ENCODE measurements at regions of chr19 and their contacts with region 1.

Region 1: DNA sequence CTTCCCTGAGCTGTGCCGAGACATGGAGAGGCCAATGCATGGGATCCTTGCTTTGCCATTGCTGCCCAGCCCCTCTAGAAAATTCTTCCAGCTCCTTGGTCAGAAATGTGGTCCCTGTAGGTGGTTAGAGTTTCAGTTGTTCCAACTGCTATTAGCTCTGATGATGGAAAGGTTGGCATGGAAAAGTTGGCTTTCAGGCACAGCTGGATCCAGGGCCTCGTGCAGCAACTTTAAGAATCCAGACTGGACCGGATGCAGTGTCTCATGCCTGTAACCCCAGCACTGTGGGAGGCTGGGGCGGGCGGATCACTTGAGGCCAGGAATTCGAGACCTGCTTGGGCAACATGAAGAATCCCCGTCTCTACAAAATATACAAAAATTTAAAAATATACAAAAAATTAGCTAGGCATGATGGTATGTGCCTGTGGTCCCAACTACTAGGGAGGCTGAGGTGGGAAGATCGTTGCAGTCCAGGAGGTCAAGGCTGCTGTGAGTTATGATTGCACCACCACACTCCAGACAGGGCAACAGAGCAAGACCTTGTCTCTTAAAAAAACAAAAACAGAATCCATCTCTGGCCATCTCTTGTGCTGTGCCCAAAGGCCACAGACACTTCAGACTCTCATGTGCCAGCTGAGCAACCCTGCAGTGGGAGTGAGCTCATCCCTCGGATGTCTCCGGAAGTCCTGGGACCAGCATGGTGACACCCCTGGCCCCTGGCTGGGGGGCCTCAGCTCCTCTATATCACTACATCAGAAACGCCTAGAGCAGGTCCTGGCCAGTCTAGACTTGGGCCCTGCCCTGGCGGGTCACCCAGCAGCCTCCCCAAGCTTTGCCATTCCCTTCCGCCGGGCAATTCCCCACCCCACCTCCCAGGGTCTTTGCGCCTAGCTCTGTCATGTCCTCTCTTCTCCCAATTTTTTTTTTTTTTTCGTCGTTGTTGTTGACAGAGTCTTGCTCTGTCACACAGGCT is 16.8 kb downstream of the MEX3D start:
- DNase-seq: no peak
- ATAC-seq: no peak

Region 2: GRCh38 chr19:1524292-1524971 is 26.9 kb before region 1 on chr19:
- intact Hi-C with region 1: no loop called
- DNase-seq: no peak
- ATAC-seq: no peak

Region 3: DNA sequence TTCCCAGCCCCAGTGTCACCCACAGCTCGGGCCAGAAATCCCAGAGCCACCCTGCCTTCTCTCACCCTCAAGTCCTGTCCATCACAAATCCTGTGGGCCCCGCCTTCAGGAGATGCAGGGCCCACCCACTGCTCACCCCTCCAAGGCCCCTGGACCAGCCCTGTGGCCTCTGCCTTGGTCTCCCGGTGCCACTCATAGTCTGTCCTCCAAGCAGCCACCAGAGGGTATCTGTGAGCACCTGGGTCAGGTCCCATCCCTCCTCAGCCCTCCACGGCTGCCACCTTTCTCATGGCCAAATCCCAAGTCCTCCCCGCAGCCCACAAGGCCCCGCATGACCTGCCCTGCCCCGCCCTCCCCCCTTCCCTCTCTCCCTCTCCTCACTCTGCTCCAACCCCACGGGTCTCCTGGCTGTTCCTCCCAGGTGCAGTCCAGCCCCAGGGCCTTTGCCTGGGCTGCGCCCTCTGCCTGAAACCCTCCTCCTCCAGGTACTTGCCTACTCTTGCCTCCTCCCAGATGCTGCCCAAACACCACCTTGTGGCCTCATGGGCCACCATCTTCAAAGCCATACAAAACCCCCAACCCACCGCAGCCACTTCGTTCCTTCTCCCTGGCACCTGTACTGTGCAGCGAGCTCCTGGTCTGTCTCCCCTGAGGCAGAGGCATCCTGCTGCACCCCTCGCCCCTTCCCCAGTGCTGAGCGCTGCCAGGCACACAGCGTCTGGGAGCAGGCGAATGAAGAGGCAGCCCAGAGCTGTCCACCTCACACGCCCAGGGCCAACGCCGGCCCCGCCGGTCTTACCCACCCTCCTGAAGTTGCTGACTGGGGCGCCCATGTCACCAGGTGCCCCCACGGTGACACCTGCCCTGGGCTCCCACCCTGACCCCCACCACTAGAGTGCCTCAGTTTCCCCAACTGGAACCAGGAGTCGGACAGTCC is 67.1 kb after region 1 on chr19:
- intact Hi-C with region 1: no loop called
- DNase-seq: no peak
- ATAC-seq: peak; percentile 78

Region 4: DNA sequence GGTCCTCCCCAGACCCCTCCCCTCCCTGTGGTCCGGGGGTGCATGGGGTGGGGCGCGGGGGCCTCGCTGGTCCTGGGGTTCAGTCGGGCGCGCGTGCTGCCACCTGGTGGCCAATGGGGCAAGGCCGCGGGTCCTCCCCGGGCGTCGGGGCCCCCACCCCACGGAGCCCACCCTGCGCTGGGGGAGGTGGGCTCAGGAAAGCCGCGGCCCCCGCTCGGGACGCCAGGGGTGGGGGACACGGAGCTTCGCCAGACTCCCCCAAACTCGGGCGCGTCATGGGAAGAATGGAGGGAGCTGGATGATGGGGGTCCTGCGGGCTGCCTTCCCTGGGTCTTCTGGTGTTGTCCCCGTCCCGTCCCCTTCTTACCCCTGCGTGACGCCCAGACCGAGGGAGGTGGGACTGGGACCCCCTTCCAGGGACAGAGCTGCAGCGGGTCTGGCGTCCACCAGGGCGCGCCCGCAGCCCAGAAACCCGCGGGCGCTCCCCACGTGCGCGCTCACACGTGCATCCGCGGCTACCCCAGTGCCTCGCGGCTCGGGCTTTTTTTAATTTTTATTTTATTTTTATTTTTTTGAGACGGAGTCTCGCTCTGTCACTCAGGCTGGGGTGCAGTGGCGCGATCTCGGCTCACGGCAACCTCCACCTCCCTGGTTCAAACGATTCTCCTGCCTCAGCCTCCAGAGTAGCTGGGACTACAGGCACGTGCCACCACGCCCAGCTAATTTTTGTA is 120.8 kb after region 1 on chr19:
- intact Hi-C with region 1: loop called (anchors 2 kb)
- DNase-seq: peak; percentile 67
- ATAC-seq: peak; percentile 70

Region 5: GRCh38 chr19:1767464-1767933 is 216.1 kb after region 1 on chr19:
- intact Hi-C with region 1: loop called (anchors 2 kb)
- DNase-seq: peak; percentile 52
- ATAC-seq: peak; percentile 71